ENCODE measurements at regions of chr5 and their contacts with region 1.

Region 1: GRCh38 chr5:14937254-14937653 is 65.7 kb upstream of the ANKH start:
- DNase-seq: no peak
- H3K4me3 ChIP-seq: no peak overlapping the region
- H3K27ac ChIP-seq: no peak overlapping the region
- H3K27me3 ChIP-seq: peaks cover 2% of the 10 kb centered on the region
- CTCF ChIP-seq: no peak

Region 2: DNA sequence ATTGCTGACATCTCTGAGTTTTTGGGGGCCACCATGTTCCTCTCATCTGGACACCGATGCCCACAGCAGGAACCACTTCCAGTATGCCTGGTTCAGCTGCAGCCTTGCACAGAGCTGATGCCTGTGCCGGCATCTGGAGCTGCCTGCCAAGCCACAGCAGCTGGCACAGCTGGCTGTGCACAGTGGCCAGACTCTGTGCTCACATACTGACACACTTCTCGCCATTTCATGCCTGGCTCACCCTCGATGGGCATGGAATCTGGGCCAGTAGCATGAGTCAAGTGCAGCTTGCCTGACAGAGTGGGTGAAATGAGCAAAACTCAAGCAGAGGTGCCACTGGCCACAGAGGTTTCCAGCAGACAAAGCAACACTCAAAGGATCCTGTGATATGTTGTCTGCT is 1856.1 kb before region 1 on chr5:
- CTCF ChIA-PET with region 1: interaction called, 10 read pairs
- POLR2A ChIA-PET with region 1: no interaction called
- DNase-seq: no peak
- H3K4me3 ChIP-seq: no peak overlapping the region
- H3K27ac ChIP-seq: no peak overlapping the region
- H3K27me3 ChIP-seq: no peaks in the 10 kb centered on the region
- CTCF ChIP-seq: no peak

Region 3: GRCh38 chr5:14948383-14948782 is 11.1 kb after region 1 on chr5:
- CTCF ChIA-PET with region 1: no interaction called
- POLR2A ChIA-PET with region 1: no interaction called
- DNase-seq: no peak
- H3K4me3 ChIP-seq: no peak overlapping the region
- H3K27ac ChIP-seq: no peak overlapping the region
- H3K27me3 ChIP-seq: peaks cover 19% of the 10 kb centered on the region
- CTCF ChIP-seq: no peak